ENCODE measurements at regions of chr6 and their contacts with region 1.

Region 1: GRCh38 chr6:105992315-105992961 is 93.7 kb upstream of the PRDM1 start:
- DNase-seq: peak; percentile 76 to 88 (median 85)
- H3K4me3 ChIP-seq: peak overlapping the region; percentile 81 to 94 (median 93)
- H3K4me3 Mint-ChIP-seq: peak overlapping the region; percentile 93 to 99
- H3K27ac ChIP-seq: peak overlapping the region in 1 of 2 donors; percentile 79
- H3K27ac Mint-ChIP-seq: peak overlapping the region; percentile 36 to 93 (median 86)
- H3K4me1 ChIP-seq: peaks cover 30 to 40% of the 10 kb centered on the region in 2 donors
- H3K4me1 Mint-ChIP-seq: peaks cover 31% of the 10 kb centered on the region
- H3K27me3 ChIP-seq: peaks cover 56 to 79% of the 10 kb centered on the region in 2 donors
- H3K27me3 Mint-ChIP-seq: peaks cover 70 to 75% (median 72%) of the 10 kb centered on the region in 3 donors
- CTCF ChIP-seq: no peak

Region 2: GRCh38 chr6:105880030-105880492 is 112.4 kb before region 1 on chr6:
- intact Hi-C with region 1: loop called in 1 of 2 experiments (anchors 5 kb)
- DNase-seq: peak; percentile 95 to 98 (median 96)
- H3K4me3 ChIP-seq: peak overlapping the region in 1 of 3 experiments; percentile 34
- H3K4me3 Mint-ChIP-seq: peak overlapping the region; percentile 54 to 75
- H3K27ac ChIP-seq: peak overlapping the region; percentile 75 to 95
- H3K27ac Mint-ChIP-seq: peak overlapping the region; percentile 90 to 99 (median 97)
- H3K4me1 ChIP-seq: peaks cover 49 to 59% of the 10 kb centered on the region in 2 donors
- H3K4me1 Mint-ChIP-seq: peaks cover 68% of the 10 kb centered on the region
- H3K27me3 ChIP-seq: no peaks in the 10 kb centered on the region
- H3K27me3 Mint-ChIP-seq: peaks cover 0 to 9% (median 0%) of the 10 kb centered on the region in 3 donors
- CTCF ChIP-seq: no peak

Region 3: DNA sequence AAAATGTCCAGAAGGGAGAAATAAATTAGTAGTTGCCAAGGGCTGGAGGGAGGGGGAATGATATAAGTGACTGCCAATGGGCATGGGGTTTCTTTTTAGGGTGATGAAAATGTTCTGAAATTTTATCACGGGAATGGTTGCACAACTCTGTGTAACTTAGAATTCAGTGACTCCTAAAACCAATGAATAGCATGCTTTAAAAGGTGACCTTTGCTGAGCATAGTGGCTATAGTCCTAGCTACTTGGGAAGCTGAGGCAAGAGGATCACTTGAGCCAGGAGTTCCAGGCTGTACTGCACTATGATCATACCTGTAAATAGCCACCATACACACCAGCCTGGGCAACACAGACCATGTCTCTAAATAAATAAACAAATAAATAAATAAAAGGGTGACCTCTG is 224.1 kb after region 1 on chr6:
- intact Hi-C with region 1: loop called in 1 of 2 experiments (anchors 10 kb)
- DNase-seq: peak; percentile 7 to 25 (median 10)
- H3K4me3 ChIP-seq: no peak overlapping the region
- H3K4me3 Mint-ChIP-seq: no peak overlapping the region
- H3K27ac ChIP-seq: no peak overlapping the region
- H3K27ac Mint-ChIP-seq: peak overlapping the region in 1 of 7 donors; percentile 4
- H3K4me1 ChIP-seq: peaks cover 0 to 2% of the 10 kb centered on the region in 2 donors
- H3K4me1 Mint-ChIP-seq: peaks cover 13% of the 10 kb centered on the region
- H3K27me3 ChIP-seq: no peaks in the 10 kb centered on the region
- H3K27me3 Mint-ChIP-seq: no peaks in the 10 kb centered on the region
- CTCF ChIP-seq: no peak

Measured in CD14-positive monocyte (primary cell).